WTC11 (cell line): ENCODE measurements at regions of chr10 and their contacts with region 1.

Region 1: GRCh38 chr10:96513698-96514561 is at the start of gene TLL2:
- DNase-seq: peak; percentile 95
- ATAC-seq: peak; percentile 88
- H3K4me3 Mint-ChIP-seq: peak within 1 kb of the TSS; percentile 77
- H3K27ac Mint-ChIP-seq: no peak within 1 kb of the TSS
- H3K4me1 Mint-ChIP-seq: peaks cover 43% of the 10 kb centered on the region
- H3K27me3 Mint-ChIP-seq: peaks cover 39% of the 10 kb centered on the region
- CTCF ChIP-seq: no peak
- total RNA-seq, gene TLL2: 9.1 to 9.2 TPM (median 9.1 TPM) in 3 replicates

Region 2: GRCh38 chr10:96334616-96335526 is 179.1 kb before region 1 on chr10:
- CTCF ChIA-PET with region 1: interaction called, 16 read pairs
- POLR2A ChIA-PET with region 1: no interaction called
- DNase-seq: no peak
- ATAC-seq: peak; percentile 79
- H3K4me3 Mint-ChIP-seq: no peak overlapping the region
- H3K27ac Mint-ChIP-seq: no peak overlapping the region
- H3K4me1 Mint-ChIP-seq: peaks cover 26% of the 10 kb centered on the region
- H3K27me3 Mint-ChIP-seq: peaks cover 4% of the 10 kb centered on the region
- CTCF ChIP-seq: peak; percentile 75

Region 3: GRCh38 chr10:96440361-96441292 is 73.3 kb before region 1 on chr10:
- CTCF ChIA-PET with region 1: interaction called, 25 read pairs
- POLR2A ChIA-PET with region 1: no interaction called
- DNase-seq: no peak
- ATAC-seq: no peak
- H3K4me3 Mint-ChIP-seq: no peak overlapping the region
- H3K27ac Mint-ChIP-seq: peak overlapping the region; percentile 65
- H3K4me1 Mint-ChIP-seq: peaks cover 32% of the 10 kb centered on the region
- H3K27me3 Mint-ChIP-seq: no peaks in the 10 kb centered on the region; the same call in 1 of the 2 replicates
- CTCF ChIP-seq: no peak

Region 4: DNA sequence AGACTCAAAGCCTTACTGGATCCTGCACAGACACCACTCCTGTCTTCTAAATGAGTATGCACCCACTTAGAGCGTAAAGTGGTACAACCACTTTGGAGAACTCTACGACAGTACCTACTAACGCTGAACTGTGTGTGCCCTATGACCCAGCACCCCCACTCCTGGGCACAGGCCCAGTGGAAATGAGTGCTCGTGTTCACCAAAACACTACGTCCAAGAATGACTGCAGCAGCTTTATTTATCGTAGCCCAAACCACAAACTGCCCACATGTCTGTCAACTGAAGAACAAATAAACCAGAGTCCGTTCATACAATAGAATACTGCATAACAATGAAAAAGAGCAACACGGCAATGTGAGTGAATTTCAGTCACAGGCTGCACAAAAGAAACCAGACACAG is 35.6 kb before region 1 on chr10:
- CTCF ChIA-PET with region 1: interaction called, 14 read pairs
- POLR2A ChIA-PET with region 1: no interaction called
- DNase-seq: no peak
- ATAC-seq: no peak
- H3K4me3 Mint-ChIP-seq: no peak overlapping the region
- H3K27ac Mint-ChIP-seq: no peak overlapping the region
- H3K4me1 Mint-ChIP-seq: 0 out of 2 replicates have a peak, but pooled peaks cover 5% of the 10 kb centered on the region
- H3K27me3 Mint-ChIP-seq: no peaks in the 10 kb centered on the region
- CTCF ChIP-seq: no peak

Region 5: GRCh38 chr10:96501985-96502384 is 11.9 kb before region 1 on chr10:
- CTCF ChIA-PET with region 1: interaction called, 46 read pairs
- POLR2A ChIA-PET with region 1: no interaction called
- DNase-seq: no peak
- ATAC-seq: no peak
- H3K4me3 Mint-ChIP-seq: no peak overlapping the region
- H3K27ac Mint-ChIP-seq: no peak overlapping the region
- H3K4me1 Mint-ChIP-seq: peaks cover 19% of the 10 kb centered on the region
- H3K27me3 Mint-ChIP-seq: no peaks in the 10 kb centered on the region; the same call in 1 of the 2 replicates
- CTCF ChIP-seq: no peak

Region 6: GRCh38 chr10:96556003-96556402 is 42.1 kb after region 1 on chr10:
- CTCF ChIA-PET with region 1: interaction called, 18 read pairs
- POLR2A ChIA-PET with region 1: no interaction called
- DNase-seq: no peak
- ATAC-seq: no peak
- H3K4me3 Mint-ChIP-seq: no peak overlapping the region
- H3K27ac Mint-ChIP-seq: no peak overlapping the region
- H3K4me1 Mint-ChIP-seq: no peaks in the 10 kb centered on the region
- H3K27me3 Mint-ChIP-seq: no peaks in the 10 kb centered on the region
- CTCF ChIP-seq: no peak

Region 7: GRCh38 chr10:96673318-96674099 is 159.6 kb after region 1 on chr10:
- CTCF ChIA-PET with region 1: no interaction called
- POLR2A ChIA-PET with region 1: no interaction called
- DNase-seq: no peak
- ATAC-seq: no peak
- H3K4me3 Mint-ChIP-seq: no peak overlapping the region
- H3K27ac Mint-ChIP-seq: no peak overlapping the region
- H3K4me1 Mint-ChIP-seq: peaks cover 17% of the 10 kb centered on the region
- H3K27me3 Mint-ChIP-seq: no peaks in the 10 kb centered on the region
- CTCF ChIP-seq: no peak